H1 (cell line): ENCODE measurements at regions of chr3 and their contacts with region 1.

Region 1: DNA sequence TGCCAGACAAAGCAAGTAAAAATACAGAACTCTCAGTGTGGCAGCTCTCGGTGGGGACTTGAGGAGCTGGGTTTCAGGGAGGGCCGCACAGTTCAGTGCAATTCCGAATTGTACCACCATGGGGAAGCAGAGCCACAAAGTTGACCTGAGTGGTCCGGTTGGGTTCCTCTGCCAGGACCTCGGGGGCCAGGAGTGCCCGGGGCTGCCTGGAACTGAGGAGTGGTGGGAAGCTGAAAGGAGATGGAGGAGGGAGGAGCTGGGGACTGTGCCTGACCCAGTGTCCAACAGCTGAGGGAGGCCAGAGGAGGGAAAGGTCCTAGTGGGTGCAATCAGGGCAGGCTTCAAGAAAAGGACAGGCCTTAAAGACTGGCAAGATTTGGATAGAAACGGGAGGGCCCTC is 32.2 kb upstream of the TRH start:
- DNase-seq: peak; percentile 75 to 91
- H3K4me3 ChIP-seq: no peak overlapping the region
- H3K27ac ChIP-seq: no peak overlapping the region
- H3K4me1 ChIP-seq: no peaks in the 10 kb centered on the region; a peak in 1 of 7 replicates
- H3K27me3 ChIP-seq: peaks cover 0 to 5% (median 0%) of the 10 kb centered on the region in 4 experiments; a peak in 1 of 7 replicates
- CTCF ChIP-seq: peak; percentile 87 to 94 (median 90)
- EP300 ChIP-seq: no peak
- POLR2A ChIP-seq: no peak
- RAD21 ChIP-seq: peak; percentile 97

Region 2: DNA sequence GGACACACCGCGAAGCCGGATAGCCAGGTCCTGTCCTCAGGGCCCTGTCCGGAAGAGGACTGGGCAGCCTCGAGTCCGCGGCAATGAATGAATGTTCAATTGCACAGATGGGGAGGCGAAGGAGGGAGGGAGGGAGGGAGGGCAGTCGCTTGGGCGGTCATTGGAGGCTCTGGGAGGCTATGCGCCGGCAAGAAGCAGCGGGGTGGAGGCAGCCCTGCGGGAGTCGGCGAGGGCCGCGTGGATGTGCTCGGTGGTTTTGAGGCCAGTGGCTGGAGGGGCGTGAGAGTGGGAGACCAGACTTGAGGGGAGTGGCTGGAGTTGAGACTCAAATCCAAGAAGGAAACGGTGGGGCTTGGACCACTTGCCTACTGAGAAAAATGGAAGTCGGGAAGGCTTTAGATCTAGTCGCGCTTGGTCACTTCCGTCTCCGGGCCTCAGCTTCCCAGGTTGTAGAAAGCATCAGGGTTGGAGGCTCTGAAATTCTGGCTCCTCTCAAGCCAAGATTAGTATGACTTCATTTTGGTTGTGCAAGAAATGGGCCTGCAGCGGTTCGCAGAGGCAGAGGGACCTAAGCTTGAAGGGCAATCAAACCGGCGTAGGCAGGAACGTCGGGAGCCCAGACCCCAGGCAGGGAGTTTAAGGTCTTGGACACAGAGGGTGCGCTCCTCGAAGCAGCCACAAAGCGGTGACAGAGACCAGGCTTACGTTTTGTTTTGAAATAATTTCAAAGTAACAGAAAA is 314.7 kb before region 1 on chr3:
- CTCF ChIA-PET with region 1: interaction called, 10 read pairs
- POLR2A ChIA-PET with region 1: no interaction called
- DNase-seq: peak in 1 of 2 experiments; percentile 80
- H3K4me3 ChIP-seq: peak overlapping the region; percentile 61 to 85 (median 78)
- H3K27ac ChIP-seq: peak overlapping the region; percentile 8; the same call in 1 of the 2 replicates
- H3K4me1 ChIP-seq: peaks cover 3 to 9% (median 5%) of the 10 kb centered on the region in 4 experiments
- H3K27me3 ChIP-seq: no peaks in the 10 kb centered on the region
- CTCF ChIP-seq: peak in 2 of 3 experiments; percentile 86 to 92; a peak in 3 of 4 replicates
- EP300 ChIP-seq: no peak
- POLR2A ChIP-seq: peak in 1 of 2 experiments; percentile 66; a peak in 2 of 3 replicates
- RAD21 ChIP-seq: peak; percentile 98 to 99

Region 3: DNA sequence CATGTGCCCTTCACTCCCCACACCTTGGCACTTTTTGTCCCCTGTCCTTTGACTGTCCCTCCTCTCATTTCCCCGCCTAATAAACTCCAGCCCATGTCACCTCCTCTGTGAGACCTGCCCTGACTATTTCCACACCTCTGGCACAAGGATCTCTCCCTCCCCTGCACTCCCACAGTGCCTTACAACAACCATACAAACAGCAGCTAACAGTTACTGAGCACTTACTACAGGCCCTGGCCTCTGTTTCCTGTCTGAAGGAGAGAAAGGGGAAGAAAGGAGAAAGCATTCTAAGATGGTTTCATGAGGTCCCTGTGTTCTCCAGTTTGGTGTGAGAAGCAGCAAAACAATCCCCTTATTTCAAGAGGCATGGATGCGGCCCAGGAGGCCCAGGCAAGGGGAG is 12.2 kb after region 1 on chr3:
- CTCF ChIA-PET with region 1: interaction called, 45 read pairs
- POLR2A ChIA-PET with region 1: interaction called, 3 read pairs
- DNase-seq: no peak
- H3K4me3 ChIP-seq: no peak overlapping the region
- H3K27ac ChIP-seq: no peak overlapping the region
- H3K4me1 ChIP-seq: no peaks in the 10 kb centered on the region
- H3K27me3 ChIP-seq: 0 out of 7 replicates have a peak, but pooled peaks cover 0 to 5% (median 2%) of the 10 kb centered on the region in 4 experiments
- CTCF ChIP-seq: no peak
- EP300 ChIP-seq: no peak
- POLR2A ChIP-seq: no peak
- RAD21 ChIP-seq: no peak

Region 4: DNA sequence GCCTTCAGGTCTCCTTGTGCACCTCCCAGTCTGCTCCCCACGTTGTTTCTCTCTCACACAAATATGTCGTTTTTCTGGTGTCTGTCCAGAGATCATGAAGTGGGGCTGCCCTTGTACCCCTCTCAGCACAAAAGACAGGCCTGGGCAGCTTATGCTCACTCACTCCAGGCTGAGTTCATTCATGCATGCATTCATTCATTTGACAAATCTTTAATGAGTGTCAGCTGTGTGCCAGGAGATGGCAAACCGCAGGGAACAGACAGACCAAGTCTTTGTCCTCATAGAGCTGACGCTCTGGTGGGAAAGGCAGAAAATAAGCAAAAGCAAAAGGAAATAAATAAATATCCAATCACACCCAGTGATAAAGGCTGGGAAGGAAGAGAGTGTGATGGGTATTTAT is 24.6 kb after region 1 on chr3:
- CTCF ChIA-PET with region 1: interaction called, 41 read pairs
- POLR2A ChIA-PET with region 1: interaction called, 3 read pairs
- DNase-seq: no peak
- H3K4me3 ChIP-seq: no peak overlapping the region
- H3K27ac ChIP-seq: no peak overlapping the region
- H3K4me1 ChIP-seq: peaks cover 0 to 10% (median 8%) of the 10 kb centered on the region in 4 experiments; a peak in 4 of 7 replicates
- H3K27me3 ChIP-seq: peaks cover 18 to 59% (median 53%) of the 10 kb centered on the region in 4 experiments
- CTCF ChIP-seq: no peak
- EP300 ChIP-seq: no peak
- POLR2A ChIP-seq: no peak
- RAD21 ChIP-seq: no peak

Region 5: GRCh38 chr3:129984125-129984524 is 41.8 kb after region 1 on chr3:
- CTCF ChIA-PET with region 1: interaction called, 99 read pairs
- POLR2A ChIA-PET with region 1: no interaction called
- DNase-seq: peak in 1 of 2 experiments; percentile 56
- H3K4me3 ChIP-seq: no peak overlapping the region
- H3K27ac ChIP-seq: no peak overlapping the region
- H3K4me1 ChIP-seq: no peaks in the 10 kb centered on the region
- H3K27me3 ChIP-seq: peaks cover 1 to 24% (median 17%) of the 10 kb centered on the region in 4 experiments
- CTCF ChIP-seq: no peak
- EP300 ChIP-seq: no peak
- POLR2A ChIP-seq: no peak
- RAD21 ChIP-seq: no peak

Region 6: GRCh38 chr3:130010556-130010955 is 68.3 kb after region 1 on chr3:
- CTCF ChIA-PET with region 1: interaction called, 72 read pairs
- POLR2A ChIA-PET with region 1: no interaction called
- DNase-seq: no peak
- H3K4me3 ChIP-seq: no peak overlapping the region
- H3K27ac ChIP-seq: no peak overlapping the region
- H3K4me1 ChIP-seq: no peaks in the 10 kb centered on the region
- H3K27me3 ChIP-seq: no peaks in the 10 kb centered on the region
- CTCF ChIP-seq: no peak
- EP300 ChIP-seq: no peak
- POLR2A ChIP-seq: no peak
- RAD21 ChIP-seq: no peak

Region 7: DNA sequence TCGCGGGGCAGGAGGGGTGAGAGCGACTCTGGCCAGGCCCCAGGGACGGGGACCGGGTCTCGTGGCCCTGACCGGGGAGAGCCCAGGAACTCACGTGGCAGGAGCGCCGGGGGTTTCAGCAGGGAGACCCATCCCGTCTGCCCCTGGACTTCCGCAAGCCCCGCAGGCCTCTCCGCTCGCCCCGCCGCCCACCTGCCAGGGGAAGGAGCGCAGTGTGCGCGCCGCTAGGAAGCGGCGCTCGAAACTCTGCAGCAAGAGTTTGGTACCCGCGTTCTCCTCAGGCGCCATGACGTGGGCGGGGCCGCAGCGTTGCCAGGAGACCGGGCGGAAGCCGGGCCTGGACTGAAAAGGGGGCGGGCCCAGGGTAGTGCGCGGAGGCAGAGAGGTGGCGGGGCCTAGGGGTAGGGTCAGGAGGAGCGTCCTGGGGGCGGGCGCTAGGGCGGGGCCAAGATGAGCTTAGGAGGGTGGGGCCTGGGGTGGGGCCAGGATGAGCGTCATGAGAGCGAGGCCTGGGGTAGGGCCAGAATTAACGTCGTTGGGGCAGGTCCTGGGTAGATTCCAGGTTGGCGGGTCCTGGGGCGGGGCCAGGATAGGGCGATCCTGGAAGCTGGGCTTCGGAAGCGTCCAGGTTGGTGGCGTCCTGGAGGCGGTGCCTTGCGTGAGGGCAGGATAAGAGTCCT is 169.0 kb after region 1 on chr3:
- CTCF ChIA-PET with region 1: interaction called, 75 read pairs
- POLR2A ChIA-PET with region 1: no interaction called
- DNase-seq: peak; percentile 93 to 98
- H3K4me3 ChIP-seq: peak overlapping the region; percentile 62 to 88 (median 82)
- H3K27ac ChIP-seq: no peak overlapping the region; the same call in 1 of the 2 replicates
- H3K4me1 ChIP-seq: peaks cover 0 to 3% (median 0%) of the 10 kb centered on the region in 4 experiments; a peak in 1 of 7 replicates
- H3K27me3 ChIP-seq: no peaks in the 10 kb centered on the region
- CTCF ChIP-seq: no peak
- EP300 ChIP-seq: no peak
- POLR2A ChIP-seq: peak in 1 of 2 experiments; percentile 45; a peak in 1 of 3 replicates
- RAD21 ChIP-seq: no peak